ENCODE measurements at regions of chr14 and their contacts with region 1.

Region 1: DNA sequence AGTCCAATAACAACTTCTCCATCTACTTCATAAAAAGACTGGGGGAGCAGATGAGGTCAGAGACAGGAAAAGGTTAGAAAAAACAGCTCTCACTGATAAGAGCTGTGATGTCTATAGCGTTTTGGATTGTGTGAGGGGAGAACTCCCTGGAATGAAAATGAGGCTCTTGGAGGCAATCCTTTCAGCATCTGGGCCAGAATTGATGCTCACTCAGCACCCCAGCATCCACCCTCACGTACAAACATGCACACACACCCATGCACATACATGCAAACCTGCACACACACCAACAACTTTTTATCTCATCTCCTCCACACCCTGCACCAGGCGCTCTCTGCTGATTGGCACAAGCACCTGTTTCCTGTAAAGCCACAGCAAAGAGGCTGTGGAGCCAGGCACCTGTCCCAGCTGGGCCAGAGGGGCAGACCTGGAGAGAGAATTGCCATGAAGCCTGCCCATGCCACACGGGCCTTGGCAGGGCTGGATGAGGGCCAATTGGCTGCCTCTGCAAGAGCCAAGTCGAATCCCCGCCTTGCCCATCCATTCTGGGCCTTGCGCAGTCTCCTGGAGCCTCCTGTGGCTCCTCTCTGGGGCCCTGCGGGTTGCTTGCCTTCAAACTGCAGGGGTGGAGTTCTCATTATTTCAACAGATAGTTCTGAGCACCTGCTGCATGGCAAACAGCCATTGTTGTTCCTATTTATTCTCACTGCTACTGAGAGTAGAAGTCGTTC is 53.1 kb downstream of the SYNE3 start:
- DNase-seq: peak; percentile 34
- H3K4me3 Mint-ChIP-seq: no peak overlapping the region
- H3K27ac Mint-ChIP-seq: peak overlapping the region; percentile 86
- H3K4me1 Mint-ChIP-seq: peaks cover 35% of the 10 kb centered on the region
- H3K27me3 Mint-ChIP-seq: no peaks in the 10 kb centered on the region

Region 2: DNA sequence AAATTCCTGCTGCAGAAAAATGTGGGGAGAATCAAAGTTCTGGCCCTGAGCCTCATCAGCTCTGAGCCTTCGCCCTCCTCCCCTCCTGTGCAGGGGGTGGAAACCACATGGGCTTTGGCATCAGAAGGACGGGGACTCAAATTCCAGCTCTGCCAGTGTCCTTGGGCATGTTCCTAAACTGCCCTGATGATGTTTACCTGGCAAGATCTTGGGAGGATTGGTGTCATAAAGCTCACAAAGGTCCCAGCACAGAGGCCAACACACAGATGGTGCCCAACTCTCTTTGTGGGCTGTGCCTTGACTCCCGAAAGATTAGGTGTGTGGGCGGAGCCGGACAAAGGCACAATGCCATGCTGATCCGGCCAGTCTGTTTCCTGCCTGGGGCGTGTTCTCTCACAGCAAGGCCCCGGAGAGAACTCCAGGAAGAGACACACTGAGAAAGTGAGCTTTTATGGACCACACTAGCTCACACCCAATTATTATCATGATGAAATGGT is 123.1 kb before region 1 on chr14:
- CTCF ChIA-PET with region 1: no interaction called
- POLR2A ChIA-PET with region 1: no interaction called
- DNase-seq: no peak
- H3K4me3 Mint-ChIP-seq: no peak overlapping the region
- H3K27ac Mint-ChIP-seq: no peak overlapping the region
- H3K4me1 Mint-ChIP-seq: no peaks in the 10 kb centered on the region
- H3K27me3 Mint-ChIP-seq: peaks cover 29% of the 10 kb centered on the region

Region 3: GRCh38 chr14:95442633-95443021 is 20.7 kb before region 1 on chr14:
- CTCF ChIA-PET with region 1: interaction called, 12 read pairs
- POLR2A ChIA-PET with region 1: interaction called, 8 read pairs
- DNase-seq: peak; percentile 75
- H3K4me3 Mint-ChIP-seq: no peak overlapping the region
- H3K27ac Mint-ChIP-seq: no peak overlapping the region
- H3K4me1 Mint-ChIP-seq: peaks cover 3% of the 10 kb centered on the region
- H3K27me3 Mint-ChIP-seq: no peaks in the 10 kb centered on the region